Heart left ventricle (tissue), 16 donors: ENCODE measurements at regions of chr3 and their contacts with region 1.

Region 1: DNA sequence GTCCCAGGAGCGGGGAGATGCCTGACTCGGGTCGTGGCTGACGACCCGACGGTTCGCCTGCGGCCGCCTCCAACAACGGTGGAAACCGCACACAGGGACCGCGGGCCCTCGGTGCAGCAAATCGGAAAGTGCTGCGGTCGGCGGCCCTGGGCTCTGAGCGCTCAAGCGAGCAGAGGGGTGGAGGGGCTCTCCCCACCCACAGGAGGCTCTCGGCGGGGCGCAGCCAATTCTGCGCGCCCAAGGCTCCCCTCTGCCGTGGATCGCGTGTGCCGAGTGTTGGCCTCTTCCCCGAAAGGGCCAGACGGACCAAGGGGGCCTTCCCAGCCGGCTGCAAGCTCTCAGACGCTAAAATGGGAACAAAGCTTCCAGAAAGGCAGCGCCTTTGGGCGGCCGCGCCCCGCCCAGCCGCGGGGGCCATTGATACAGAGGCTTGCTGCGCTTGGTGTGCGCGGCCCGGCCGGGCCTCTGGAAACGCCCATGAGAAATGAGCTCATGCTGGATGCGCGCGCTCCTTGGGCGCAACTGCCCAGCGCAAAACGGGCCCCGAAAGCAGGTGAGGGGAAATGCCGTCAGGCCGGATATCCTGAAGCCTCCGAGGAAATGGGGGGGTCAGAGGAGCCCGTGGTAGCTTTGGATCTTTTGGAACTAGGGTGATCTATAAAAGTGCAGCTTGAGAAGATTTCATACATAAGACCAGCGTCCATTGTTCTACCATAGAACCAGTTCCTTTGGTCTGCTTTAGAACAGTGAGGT is 1.2 kb upstream of the GSK3B start:
- DNase-seq: peak; percentile 90 to 94 (median 93)
- ATAC-seq: peak; percentile 52 to 71 (median 68)
- H3K4me3 ChIP-seq: peak overlapping the region; percentile 53 to 96 (median 75)
- H3K27ac ChIP-seq: peak overlapping the region; percentile 95 to 100 (median 99)
- H3K4me1 ChIP-seq: peaks cover 9 to 31% (median 23%) of the 10 kb centered on the region in 12 donors
- H3K27me3 ChIP-seq: no peaks in the 10 kb centered on the region
- CTCF ChIP-seq: no peak
- POLR2A ChIP-seq: peak; percentile 64 to 90

Region 2: DNA sequence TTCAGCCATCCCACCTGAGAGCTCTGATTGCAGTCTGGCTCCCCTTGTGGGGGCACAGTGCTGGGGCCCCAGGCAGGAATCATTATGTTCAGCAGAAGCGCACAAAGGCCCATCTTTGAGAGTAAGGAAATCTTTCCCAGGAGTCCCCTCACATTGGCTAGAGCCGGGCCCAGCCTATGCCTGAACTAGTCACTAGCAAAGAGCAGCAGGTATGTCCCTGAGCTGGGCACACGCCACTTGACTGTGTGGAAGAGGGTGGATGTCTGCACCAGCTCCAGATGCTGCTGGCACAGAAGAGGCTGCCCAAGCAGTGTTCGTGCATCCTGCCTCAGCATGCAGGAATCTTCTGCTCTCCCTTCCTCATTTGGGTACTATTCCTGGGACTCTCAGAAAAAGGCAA is 287.2 kb before region 1 on chr3:
- intact Hi-C with region 1: no loop called
- DNase-seq: no peak
- ATAC-seq: no peak
- H3K4me3 ChIP-seq: no peak overlapping the region
- H3K27ac ChIP-seq: no peak overlapping the region
- H3K4me1 ChIP-seq: peaks cover 0 to 22% (median 8%) of the 10 kb centered on the region in 12 donors
- H3K27me3 ChIP-seq: peaks cover 0 to 7% (median 0%) of the 10 kb centered on the region in 9 donors
- CTCF ChIP-seq: no peak
- POLR2A ChIP-seq: no peak

Region 3: DNA sequence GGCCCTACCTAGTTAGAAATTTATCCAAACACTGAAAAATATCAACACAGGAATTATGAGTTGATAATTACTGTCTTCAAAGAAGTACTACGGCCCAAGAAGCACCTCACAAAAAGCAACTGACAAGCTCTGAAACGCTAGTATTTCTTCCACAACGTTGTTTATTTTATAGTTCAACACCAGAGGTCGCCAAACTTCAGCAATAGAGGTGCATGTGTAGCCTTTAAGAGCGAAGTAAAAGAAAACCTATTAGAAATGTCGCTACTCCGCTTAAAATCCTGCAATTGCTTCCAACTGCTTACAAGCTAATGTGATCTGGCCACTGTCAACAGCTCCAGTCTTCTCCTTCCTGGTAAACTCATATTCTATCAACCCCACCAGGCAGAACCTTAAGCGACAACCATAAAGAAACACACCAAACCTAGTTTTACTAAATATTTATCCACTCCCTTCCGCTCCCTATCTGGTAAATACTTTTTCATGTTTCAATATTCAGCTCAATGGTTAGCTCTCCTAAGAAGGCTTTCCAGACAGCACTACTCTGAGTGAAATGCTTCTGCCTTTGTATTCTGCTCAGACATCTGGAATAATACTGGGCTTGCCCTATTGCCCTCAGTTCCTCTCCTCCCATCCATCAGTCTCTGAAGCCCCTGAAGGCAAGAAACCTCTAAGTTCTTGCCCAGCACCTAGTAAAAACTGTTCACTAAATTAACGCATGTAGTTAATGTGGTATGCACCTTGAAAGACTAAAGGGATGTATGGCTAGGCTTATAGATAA is 203.3 kb before region 1 on chr3:
- intact Hi-C with region 1: loop called in 8 of 10 experiments (anchors 5 to 10 kb)
- DNase-seq: peak in 2 of 5 donors; percentile 30 to 45
- ATAC-seq: peak; percentile 64 to 81 (median 74)
- H3K4me3 ChIP-seq: no peak overlapping the region
- H3K27ac ChIP-seq: no peak overlapping the region
- H3K4me1 ChIP-seq: peaks cover 0 to 11% (median 7%) of the 10 kb centered on the region in 12 donors
- H3K27me3 ChIP-seq: no peaks in the 10 kb centered on the region
- CTCF ChIP-seq: peak; percentile 36 to 84 (median 78)
- POLR2A ChIP-seq: no peak

Region 4: DNA sequence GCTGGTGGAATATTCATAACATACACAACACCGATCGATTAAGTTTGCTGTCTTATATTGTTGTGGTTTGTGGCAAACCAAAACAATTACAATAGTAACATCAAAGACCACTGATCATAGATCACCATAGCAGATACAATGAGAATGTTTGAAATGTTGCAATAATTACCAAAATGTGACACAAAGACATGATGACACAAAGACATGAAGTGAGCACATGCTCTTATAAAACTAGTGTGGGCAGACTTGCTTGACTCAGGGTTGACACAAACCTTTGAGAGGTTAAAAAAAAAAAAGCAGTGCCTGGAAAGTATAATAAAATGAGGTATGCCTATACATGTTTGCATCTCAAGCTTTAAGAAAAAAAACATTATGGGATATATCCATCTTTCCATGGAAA is 183.2 kb before region 1 on chr3:
- intact Hi-C with region 1: loop called in 4 of 10 experiments (anchors 5 kb)
- DNase-seq: no peak
- ATAC-seq: no peak
- H3K4me3 ChIP-seq: no peak overlapping the region
- H3K27ac ChIP-seq: no peak overlapping the region
- H3K4me1 ChIP-seq: peaks cover 0 to 32% (median 5%) of the 10 kb centered on the region in 12 donors
- H3K27me3 ChIP-seq: no peaks in the 10 kb centered on the region
- CTCF ChIP-seq: no peak
- POLR2A ChIP-seq: no peak

Region 5: DNA sequence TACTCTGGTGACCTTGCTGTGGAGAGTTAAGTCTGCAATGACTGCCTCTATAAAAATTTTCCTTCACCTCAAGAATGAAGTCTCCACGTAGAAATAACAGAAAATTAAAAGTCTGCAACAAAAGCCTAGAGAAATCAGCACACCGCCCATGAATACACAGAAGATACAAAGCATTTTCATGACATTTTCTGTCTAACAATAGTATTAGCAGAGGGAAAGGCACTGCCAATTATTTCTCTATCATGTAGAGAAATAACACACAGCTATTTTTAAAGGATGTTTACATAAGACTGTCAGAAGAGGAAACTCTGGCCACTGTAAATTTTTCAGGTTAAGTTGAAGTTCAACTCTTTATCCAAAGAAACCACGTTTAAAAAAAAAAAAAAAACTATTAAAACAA is 81.9 kb before region 1 on chr3:
- intact Hi-C with region 1: loop called in 1 of 10 experiments (anchors 5 kb)
- DNase-seq: no peak
- ATAC-seq: peak in 3 of 4 donors; percentile 45 to 69 (median 46)
- H3K4me3 ChIP-seq: no peak overlapping the region
- H3K27ac ChIP-seq: peak overlapping the region in 8 of 12 donors; percentile 3 to 45 (median 24)
- H3K4me1 ChIP-seq: peaks cover 3 to 79% (median 58%) of the 10 kb centered on the region in 12 donors
- H3K27me3 ChIP-seq: no peaks in the 10 kb centered on the region
- CTCF ChIP-seq: no peak
- POLR2A ChIP-seq: no peak

Region 6: DNA sequence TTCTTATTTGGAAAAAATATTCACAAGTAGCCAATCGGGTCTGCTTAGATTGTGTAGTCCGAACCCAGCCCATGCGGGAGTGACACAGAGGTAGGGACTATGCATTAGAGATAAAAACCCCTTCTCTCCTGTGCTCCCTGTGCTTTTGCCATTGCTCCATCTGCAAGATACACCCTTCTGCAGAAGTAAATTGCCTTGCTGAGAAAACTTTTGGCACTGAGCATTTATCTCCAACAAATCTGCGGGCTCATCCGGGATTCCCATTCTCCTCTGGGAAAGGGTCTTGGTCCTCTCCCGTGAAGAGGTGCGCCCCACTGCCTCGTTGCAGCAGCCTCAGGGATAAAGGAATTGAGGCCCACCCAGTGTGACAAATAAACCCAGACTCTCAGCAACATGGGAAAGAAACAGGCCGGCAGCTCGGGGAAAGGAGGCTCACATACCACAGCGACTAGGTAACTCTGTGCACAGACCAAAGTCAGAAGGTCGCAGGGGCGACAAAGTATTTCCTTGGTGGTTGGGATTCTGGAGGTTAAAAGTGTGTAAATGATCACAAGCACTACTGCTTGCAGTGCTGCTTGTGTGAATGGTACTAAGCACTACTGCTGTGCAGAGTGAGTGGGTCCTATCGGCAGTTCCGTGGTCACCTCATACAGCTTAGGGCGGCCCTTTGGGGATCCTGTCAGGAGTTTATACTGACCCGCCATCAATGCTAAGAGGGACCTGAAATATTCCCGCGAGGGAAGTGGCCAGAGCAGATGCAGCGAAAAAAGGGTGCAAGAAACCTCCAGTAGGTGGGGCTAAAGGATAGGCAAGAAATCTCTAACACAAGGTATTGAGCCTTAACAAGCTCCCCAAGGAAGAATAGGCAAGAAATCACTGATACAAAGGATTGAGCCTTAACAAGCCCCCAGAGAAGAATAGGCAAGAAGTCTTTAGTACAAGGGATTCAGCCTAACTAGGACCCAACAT is 55.5 kb before region 1 on chr3:
- intact Hi-C with region 1: loop called in 1 of 10 experiments (anchors 10 kb)
- DNase-seq: no peak
- ATAC-seq: no peak
- H3K4me3 ChIP-seq: no peak overlapping the region
- H3K27ac ChIP-seq: no peak overlapping the region
- H3K4me1 ChIP-seq: peaks cover 0 to 27% (median 6%) of the 10 kb centered on the region in 12 donors
- H3K27me3 ChIP-seq: no peaks in the 10 kb centered on the region
- CTCF ChIP-seq: peak in 2 of 12 donors; percentile 12 to 17
- POLR2A ChIP-seq: no peak

Region 7: GRCh38 chr3:120147072-120147871 is 51.9 kb after region 1 on chr3:
- intact Hi-C with region 1: loop called in 4 of 10 experiments (anchors 2 to 10 kb)
- DNase-seq: no peak
- ATAC-seq: peak in 3 of 4 donors; percentile 27 to 70 (median 33)
- H3K4me3 ChIP-seq: no peak overlapping the region
- H3K27ac ChIP-seq: peak overlapping the region in 11 of 12 donors; percentile 19 to 77 (median 50)
- H3K4me1 ChIP-seq: peaks cover 0 to 21% (median 12%) of the 10 kb centered on the region in 12 donors
- H3K27me3 ChIP-seq: no peaks in the 10 kb centered on the region
- CTCF ChIP-seq: peak in 3 of 12 donors; percentile 4 to 13 (median 7)
- POLR2A ChIP-seq: no peak

Region 8: DNA sequence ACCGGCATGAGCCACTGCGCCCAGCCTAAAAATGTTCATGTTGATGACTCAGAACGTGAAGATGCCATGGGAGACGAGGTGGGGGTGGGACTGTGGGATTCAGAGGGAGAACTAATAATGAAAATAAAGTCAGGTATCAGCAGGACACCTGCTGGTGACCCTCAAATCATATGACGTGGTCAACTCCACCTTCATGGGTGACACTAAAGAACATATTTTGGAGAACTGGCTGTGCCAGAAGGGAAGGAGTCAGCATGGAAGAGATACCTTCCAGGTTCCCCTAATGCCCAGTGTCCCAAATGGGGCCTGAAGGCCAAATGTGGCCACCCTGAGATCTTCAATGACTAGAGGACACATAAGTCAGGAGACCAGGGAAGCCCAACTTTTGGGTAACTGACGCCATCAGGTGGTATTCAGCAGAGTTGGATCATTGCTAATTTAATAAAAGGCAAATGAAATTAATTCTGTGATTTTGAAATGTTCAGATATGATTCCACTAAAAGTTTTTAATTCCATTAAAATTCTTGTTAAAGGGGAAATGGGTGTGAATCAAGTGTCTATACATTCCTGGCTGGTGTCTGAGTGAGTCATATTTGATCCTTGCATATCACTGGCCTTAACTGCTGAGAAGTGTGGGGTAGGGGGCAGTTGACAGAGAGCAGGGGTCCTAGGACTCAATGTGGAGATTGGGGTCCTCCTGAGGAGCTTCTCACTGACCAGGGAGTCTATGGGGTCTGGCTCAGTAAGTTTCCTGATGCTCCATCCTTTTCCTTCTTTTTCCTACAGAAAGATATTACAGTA is 87.5 kb after region 1 on chr3:
- intact Hi-C with region 1: loop called in 1 of 10 experiments (anchors 5 kb)
- DNase-seq: no peak
- ATAC-seq: peak in 2 of 4 donors; percentile 46 to 50
- H3K4me3 ChIP-seq: no peak overlapping the region
- H3K27ac ChIP-seq: no peak overlapping the region
- H3K4me1 ChIP-seq: peaks cover 0 to 3% (median 0%) of the 10 kb centered on the region in 12 donors
- H3K27me3 ChIP-seq: no peaks in the 10 kb centered on the region
- CTCF ChIP-seq: peak; percentile 15 to 56 (median 38)
- POLR2A ChIP-seq: no peak

Region 9: DNA sequence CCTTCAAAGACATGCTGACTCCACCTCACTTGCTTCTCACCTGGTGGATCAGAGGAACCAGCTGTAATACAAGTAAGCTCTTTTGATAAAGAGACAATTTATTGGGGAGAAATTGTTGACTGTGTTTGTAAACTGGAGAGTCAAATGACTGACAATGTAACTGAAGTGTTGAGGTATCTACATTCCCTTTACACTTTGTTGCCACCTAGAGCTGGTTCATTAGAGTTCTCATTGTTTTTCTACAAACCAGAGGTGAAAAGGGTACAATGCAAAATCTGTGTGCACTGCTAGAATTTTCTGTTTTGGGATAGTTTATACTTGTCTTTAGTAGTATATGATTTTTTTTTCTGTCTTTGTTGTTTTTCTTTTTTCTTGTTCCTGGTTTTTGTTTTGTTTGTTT is 262.4 kb after region 1 on chr3:
- intact Hi-C with region 1: no loop called
- DNase-seq: no peak
- ATAC-seq: no peak
- H3K4me3 ChIP-seq: no peak overlapping the region
- H3K27ac ChIP-seq: no peak overlapping the region
- H3K4me1 ChIP-seq: no peaks in the 10 kb centered on the region
- H3K27me3 ChIP-seq: no peaks in the 10 kb centered on the region
- CTCF ChIP-seq: no peak
- POLR2A ChIP-seq: no peak